CD4-positive, alpha-beta T cell (primary cell): ENCODE measurements at regions of chr11 and their contacts with region 1.

Region 1: DNA sequence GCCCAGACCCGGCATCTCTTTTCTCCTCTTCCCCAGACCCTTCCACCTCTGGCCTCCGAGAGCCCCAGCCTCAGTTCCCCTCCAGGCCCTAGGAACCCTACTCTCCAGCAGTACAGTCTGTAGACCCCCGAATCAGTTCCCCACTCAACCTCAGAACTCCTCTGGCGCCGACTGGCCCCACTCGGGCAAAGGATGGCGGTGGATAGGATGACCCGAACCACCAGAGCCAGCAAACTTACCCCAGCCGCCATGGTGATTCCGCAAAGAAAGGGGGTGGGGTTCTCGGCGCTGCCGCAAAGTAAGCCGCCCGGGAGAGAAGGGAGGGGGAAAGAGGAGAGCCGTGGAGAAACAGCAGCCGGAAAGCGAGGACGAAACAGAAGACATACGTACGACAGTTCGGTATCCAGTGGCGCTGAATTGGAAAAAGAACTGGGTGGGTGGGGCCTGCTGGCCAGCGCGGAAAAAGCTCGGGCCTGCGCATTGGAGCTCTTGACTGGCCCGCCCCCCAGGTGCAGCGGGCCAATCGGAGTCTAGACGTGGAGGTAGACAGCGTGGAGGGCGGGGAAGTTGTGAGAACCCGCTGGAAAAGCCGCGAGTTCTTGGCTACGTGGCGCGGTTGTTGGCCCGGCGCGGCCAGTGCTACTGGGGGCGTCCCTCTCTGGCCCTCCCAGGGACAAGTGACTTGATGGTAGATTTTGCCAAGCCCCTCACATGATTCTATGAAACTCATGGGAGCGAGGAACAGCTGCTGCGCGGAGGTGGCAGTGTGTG is at the start of gene EEF1G:
- DNase-seq: peak; percentile 95 to 100 (median 97)
- ATAC-seq: peak; percentile 94
- H3K4me3 ChIP-seq: peak within 1 kb of the TSS; percentile 82
- H3K4me3 Mint-ChIP-seq: peak within 1 kb of the TSS; percentile 93
- H3K27ac ChIP-seq: peak within 1 kb of the TSS; percentile 76 to 83
- H3K27ac Mint-ChIP-seq: peak within 1 kb of the TSS; percentile 89
- H3K4me1 ChIP-seq: peaks cover 48% of the 10 kb centered on the region
- H3K4me1 Mint-ChIP-seq: peaks cover 55% of the 10 kb centered on the region
- H3K27me3 ChIP-seq: no peaks in the 10 kb centered on the region
- H3K27me3 Mint-ChIP-seq: no peaks in the 10 kb centered on the region
- CTCF ChIP-seq: no peak
- total RNA-seq, gene EEF1G: 2,181 to 2,269 TPM

Region 2: DNA sequence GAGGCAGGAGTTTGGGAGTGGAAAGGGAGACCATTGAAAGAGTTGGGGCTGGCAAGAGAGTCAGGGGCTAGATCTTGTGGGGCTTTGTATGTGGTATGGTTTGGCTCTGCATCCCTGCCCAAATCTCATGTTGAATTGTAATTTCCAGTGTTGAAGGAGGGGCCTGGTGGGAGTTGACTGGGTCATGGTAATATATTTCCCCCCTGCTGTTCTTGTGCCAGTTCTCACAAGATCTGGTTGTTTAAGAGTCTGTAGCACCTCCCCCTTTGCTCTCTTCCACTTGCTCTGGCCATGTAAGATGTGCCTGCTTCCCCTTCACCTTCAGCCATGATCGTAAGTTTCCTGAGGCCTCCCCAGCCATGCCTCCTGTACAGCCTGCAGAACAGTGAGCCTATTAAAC is 646.3 kb before region 1 on chr11:
- CTCF ChIA-PET with region 1: no interaction called
- POLR2A ChIA-PET with region 1: no interaction called
- intact Hi-C with region 1: no loop called
- DNase-seq: no peak
- ATAC-seq: no peak
- H3K4me3 ChIP-seq: no peak overlapping the region
- H3K4me3 Mint-ChIP-seq: no peak overlapping the region
- H3K27ac ChIP-seq: no peak overlapping the region
- H3K27ac Mint-ChIP-seq: no peak overlapping the region
- H3K4me1 ChIP-seq: no peaks in the 10 kb centered on the region
- H3K4me1 Mint-ChIP-seq: no peaks in the 10 kb centered on the region
- H3K27me3 ChIP-seq: no peaks in the 10 kb centered on the region
- H3K27me3 Mint-ChIP-seq: peaks cover 25% of the 10 kb centered on the region
- CTCF ChIP-seq: no peak

Region 3: GRCh38 chr11:62705880-62706849 is 132.4 kb after region 1 on chr11:
- CTCF ChIA-PET with region 1: no interaction called
- POLR2A ChIA-PET with region 1: interaction called, 17 read pairs
- intact Hi-C with region 1: no loop called
- DNase-seq: peak; percentile 90 to 97 (median 94)
- ATAC-seq: peak; percentile 62
- H3K4me3 ChIP-seq: peak overlapping the region; percentile 79
- H3K4me3 Mint-ChIP-seq: peak overlapping the region; percentile 86
- H3K27ac ChIP-seq: peak overlapping the region; percentile 65 to 84
- H3K27ac Mint-ChIP-seq: peak overlapping the region; percentile 92
- H3K4me1 ChIP-seq: peaks cover 49% of the 10 kb centered on the region
- H3K4me1 Mint-ChIP-seq: peaks cover 42% of the 10 kb centered on the region
- H3K27me3 ChIP-seq: no peaks in the 10 kb centered on the region
- H3K27me3 Mint-ChIP-seq: no peaks in the 10 kb centered on the region
- CTCF ChIP-seq: no peak

Region 4: DNA sequence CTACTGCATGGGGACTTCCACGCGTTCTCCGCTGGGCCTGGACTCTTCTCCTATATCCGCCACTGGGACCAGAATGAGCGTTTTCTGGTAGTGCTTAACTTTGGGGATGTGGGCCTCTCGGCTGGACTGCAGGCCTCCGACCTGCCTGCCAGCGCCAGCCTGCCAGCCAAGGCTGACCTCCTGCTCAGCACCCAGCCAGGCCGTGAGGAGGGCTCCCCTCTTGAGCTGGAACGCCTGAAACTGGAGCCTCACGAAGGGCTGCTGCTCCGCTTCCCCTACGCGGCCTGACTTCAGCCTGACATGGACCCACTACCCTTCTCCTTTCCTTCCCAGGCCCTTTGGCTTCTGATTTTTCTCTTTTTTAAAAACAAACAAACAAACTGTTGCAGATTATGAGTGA is 314.6 kb after region 1 on chr11:
- CTCF ChIA-PET with region 1: no interaction called
- POLR2A ChIA-PET with region 1: no interaction called
- intact Hi-C with region 1: no loop called
- DNase-seq: no peak
- ATAC-seq: no peak
- H3K4me3 ChIP-seq: no peak overlapping the region
- H3K4me3 Mint-ChIP-seq: no peak overlapping the region
- H3K27ac ChIP-seq: no peak overlapping the region
- H3K27ac Mint-ChIP-seq: no peak overlapping the region
- H3K4me1 ChIP-seq: peaks cover 14% of the 10 kb centered on the region
- H3K4me1 Mint-ChIP-seq: peaks cover 17% of the 10 kb centered on the region
- H3K27me3 ChIP-seq: no peaks in the 10 kb centered on the region
- H3K27me3 Mint-ChIP-seq: no peaks in the 10 kb centered on the region
- CTCF ChIP-seq: no peak

Region 5: DNA sequence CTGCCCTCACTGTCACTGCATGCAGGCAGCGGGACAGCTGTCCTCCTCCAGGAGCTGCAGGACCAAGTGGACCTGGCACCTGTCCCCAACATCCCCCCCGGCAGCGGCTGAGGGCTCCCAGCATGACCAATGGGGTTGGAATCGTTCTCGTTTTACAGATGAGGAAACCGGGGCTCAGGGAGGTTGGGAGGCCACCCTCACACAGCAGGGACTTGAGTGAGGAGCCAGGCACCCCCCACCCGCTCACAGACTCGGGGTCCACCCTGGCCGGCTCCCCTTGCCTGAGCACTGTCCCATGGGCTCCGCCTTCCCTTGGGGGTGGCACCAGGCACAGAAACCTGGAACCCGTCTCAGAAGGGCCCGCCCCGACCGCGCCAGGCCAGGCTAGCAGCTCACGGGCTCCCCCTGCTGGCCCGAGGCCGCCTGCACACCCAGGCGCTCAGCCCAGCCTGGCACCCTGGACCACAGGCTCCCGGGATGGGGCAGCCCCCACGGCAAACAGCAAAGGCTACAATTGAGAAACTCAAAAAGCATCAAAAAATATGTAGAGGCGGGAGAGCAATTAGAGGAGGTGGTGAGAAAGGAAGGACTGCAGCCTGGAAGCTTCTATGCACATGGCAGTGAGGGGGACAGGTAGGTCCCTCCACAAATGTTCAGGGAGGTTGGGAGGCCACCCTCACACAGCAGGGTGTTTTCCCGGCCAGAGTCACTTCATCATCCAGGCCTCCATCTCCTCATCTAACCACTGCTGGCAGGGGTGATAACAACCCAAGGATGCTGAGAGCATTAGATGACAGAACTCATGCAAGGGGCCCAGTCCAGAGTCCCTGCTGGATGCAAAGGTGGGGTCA is 1579.3 kb after region 1 on chr11:
- CTCF ChIA-PET with region 1: no interaction called
- POLR2A ChIA-PET with region 1: no interaction called
- intact Hi-C with region 1: no loop called
- DNase-seq: peak; percentile 40 to 83 (median 63)
- ATAC-seq: peak; percentile 96
- H3K4me3 ChIP-seq: no peak overlapping the region
- H3K4me3 Mint-ChIP-seq: no peak overlapping the region
- H3K27ac ChIP-seq: no peak overlapping the region
- H3K27ac Mint-ChIP-seq: no peak overlapping the region
- H3K4me1 ChIP-seq: peaks cover 12% of the 10 kb centered on the region
- H3K4me1 Mint-ChIP-seq: no peaks in the 10 kb centered on the region
- H3K27me3 ChIP-seq: no peaks in the 10 kb centered on the region
- H3K27me3 Mint-ChIP-seq: no peaks in the 10 kb centered on the region
- CTCF ChIP-seq: peak; percentile 99